CD14-positive monocyte (primary cell): ENCODE measurements at regions of chr19 and their contacts with region 1.

Region 1: DNA sequence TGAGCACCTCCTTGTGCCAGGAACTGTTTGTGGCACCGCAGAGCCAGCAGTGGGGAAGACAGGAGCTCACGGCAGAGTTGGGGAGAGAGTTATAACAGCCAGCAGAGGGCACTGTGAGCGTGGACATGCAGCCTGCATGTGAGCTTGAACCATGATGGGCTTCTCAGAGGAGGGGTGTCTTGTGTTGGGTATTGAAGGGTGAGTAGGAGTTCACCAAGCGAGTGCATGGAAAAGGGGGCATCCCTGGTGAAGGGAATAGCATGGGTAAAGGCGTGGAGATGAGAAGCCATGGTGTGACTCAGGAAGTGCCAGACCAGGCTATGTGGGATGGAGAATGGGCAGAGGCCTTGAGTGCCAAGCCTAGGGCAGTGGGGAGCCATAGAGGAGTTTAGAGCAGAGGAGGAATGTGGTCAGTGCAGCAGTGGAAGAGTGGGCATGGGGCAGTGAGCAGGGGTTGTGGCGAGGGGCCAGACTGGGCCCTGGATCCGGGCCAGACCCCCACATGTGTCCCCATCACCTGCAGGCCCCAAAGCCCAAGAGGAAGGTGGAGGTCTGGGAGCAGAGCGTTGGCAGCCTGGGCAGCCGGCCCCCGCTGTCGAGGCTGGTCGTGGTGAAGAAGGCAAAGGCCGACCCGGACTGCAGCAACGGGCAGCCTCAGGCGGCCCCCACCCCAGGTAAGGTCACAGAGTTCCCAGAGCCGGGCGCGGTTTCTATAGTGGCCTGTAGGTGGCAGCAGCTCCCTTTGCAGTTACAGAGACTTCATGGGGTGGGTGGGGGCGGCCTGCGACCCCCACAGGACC is 11.8 kb upstream of the SHD start:
- DNase-seq: peak; percentile 23 to 40 (median 36)
- H3K4me3 ChIP-seq: no peak overlapping the region
- H3K4me3 Mint-ChIP-seq: no peak overlapping the region
- H3K27ac ChIP-seq: no peak overlapping the region
- H3K27ac Mint-ChIP-seq: peak overlapping the region in 4 of 7 donors; percentile 50 to 60 (median 52)
- H3K4me1 ChIP-seq: peaks cover 9 to 10% of the 10 kb centered on the region in 2 donors
- H3K4me1 Mint-ChIP-seq: peaks cover 12% of the 10 kb centered on the region
- H3K27me3 ChIP-seq: no peaks in the 10 kb centered on the region
- H3K27me3 Mint-ChIP-seq: peaks cover 0 to 3% (median 2%) of the 10 kb centered on the region in 3 donors
- CTCF ChIP-seq: peak; percentile 89

Region 2: DNA sequence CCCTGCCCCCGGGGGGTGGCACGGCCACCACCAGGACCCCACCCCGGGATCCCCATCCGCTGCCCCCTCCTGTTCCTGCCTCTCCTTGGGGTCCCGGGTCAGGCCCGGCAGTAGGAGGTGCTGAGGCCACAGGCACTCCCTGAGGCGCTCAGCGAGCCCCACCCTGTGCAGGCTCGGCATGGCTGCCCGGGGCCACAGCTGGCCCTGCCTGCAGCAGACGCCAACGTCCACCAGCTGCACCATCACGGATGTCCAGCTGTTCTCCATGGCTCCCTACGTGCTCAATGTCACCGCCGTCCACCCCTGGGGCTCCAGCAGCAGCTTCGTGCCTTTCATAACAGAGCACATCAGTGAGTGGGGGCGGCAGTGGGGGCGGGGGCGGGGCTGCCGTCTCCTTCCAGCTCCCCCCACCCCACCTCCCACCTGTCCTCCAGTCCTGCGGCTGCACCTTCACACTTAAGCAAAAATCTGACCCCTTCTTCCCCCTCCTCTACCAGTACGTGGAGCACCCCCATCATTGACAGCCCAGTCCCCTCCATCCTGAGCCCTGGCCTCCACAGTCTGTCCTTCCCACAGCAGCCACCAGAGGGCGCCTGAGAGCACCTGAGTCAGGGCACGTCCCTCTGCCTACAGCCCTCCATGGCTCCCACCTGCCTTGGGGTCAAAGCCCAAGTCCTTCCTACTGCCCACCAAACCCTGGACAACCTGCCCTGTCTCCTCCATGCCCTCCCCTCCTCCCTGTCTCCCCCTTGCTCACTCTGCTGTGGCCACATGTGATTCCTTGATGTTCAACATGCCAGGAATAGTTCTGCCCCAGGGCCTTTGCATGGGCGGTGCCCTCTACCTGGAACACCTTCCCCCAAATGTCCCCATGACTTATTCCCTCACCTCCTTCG is 34.1 kb before region 1 on chr19:
- intact Hi-C with region 1: no loop called
- DNase-seq: peak; percentile 27 to 54 (median 39)
- H3K4me3 ChIP-seq: no peak overlapping the region
- H3K4me3 Mint-ChIP-seq: no peak overlapping the region
- H3K27ac ChIP-seq: no peak overlapping the region
- H3K27ac Mint-ChIP-seq: no peak overlapping the region
- H3K4me1 ChIP-seq: peaks cover 0 to 6% of the 10 kb centered on the region in 2 donors
- H3K4me1 Mint-ChIP-seq: peaks cover 7% of the 10 kb centered on the region
- H3K27me3 ChIP-seq: peaks cover 0 to 13% of the 10 kb centered on the region in 2 donors
- H3K27me3 Mint-ChIP-seq: peaks cover 10 to 13% (median 12%) of the 10 kb centered on the region in 3 donors
- CTCF ChIP-seq: peak; percentile 76

Region 3: GRCh38 chr19:4246767-4247593 is 20.3 kb before region 1 on chr19 and contains the start of gene YJU2:
- intact Hi-C with region 1: no loop called
- DNase-seq: peak; percentile 99 to 100 (median 100)
- H3K4me3 ChIP-seq: peak within 1 kb of the TSS; percentile 59 to 98 (median 84)
- H3K4me3 Mint-ChIP-seq: peak within 1 kb of the TSS; percentile 83 to 98
- H3K27ac ChIP-seq: peak within 1 kb of the TSS; percentile 90 to 100
- H3K27ac Mint-ChIP-seq: peak within 1 kb of the TSS; percentile 99 to 100 (median 100)
- H3K4me1 ChIP-seq: peaks cover 13 to 14% of the 10 kb centered on the region in 2 donors
- H3K4me1 Mint-ChIP-seq: peaks cover 12% of the 10 kb centered on the region
- H3K27me3 ChIP-seq: no peaks in the 10 kb centered on the region
- H3K27me3 Mint-ChIP-seq: peaks cover 0 to 3% (median 0%) of the 10 kb centered on the region in 3 donors
- CTCF ChIP-seq: peak; percentile 58
- polyA plus RNA-seq, gene YJU2: 8.6 to 19.3 (median 13.4) TPM

Region 4: DNA sequence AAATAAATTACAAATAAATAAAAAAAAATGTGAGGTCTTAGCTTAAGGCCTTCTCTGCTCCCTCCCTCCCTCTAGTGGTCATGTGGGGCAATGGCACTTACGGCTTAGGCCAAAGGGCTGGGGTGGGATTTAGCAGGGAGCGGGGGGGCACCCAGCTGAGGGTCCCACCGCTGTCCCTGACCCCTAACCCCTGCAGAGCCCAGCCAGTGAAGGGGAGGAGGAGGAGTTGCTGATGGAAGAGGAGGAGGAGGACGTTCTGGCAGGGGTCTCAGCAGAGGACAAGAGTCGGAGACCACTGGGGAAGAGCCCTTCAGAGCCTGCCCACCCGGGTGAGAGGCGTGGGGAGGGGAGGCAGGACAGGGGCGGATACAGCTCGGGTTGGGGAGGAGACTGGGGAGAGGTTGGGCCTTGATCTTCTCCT is 85.4 kb after region 1 on chr19:
- intact Hi-C with region 1: loop called (anchors 2 to 5 kb)
- DNase-seq: peak; percentile 33 to 58 (median 40)
- H3K4me3 ChIP-seq: no peak overlapping the region
- H3K4me3 Mint-ChIP-seq: no peak overlapping the region
- H3K27ac ChIP-seq: no peak overlapping the region
- H3K27ac Mint-ChIP-seq: no peak overlapping the region
- H3K4me1 ChIP-seq: no peaks in the 10 kb centered on the region
- H3K4me1 Mint-ChIP-seq: peaks cover 2% of the 10 kb centered on the region
- H3K27me3 ChIP-seq: no peaks in the 10 kb centered on the region
- H3K27me3 Mint-ChIP-seq: peaks cover 0 to 3% (median 0%) of the 10 kb centered on the region in 3 donors
- CTCF ChIP-seq: peak; percentile 95

Region 5: GRCh38 chr19:4524808-4525562 is 257.7 kb after region 1 on chr19:
- intact Hi-C with region 1: loop called in 1 of 2 experiments (anchors 10 kb)
- DNase-seq: peak; percentile 61 to 66 (median 62)
- H3K4me3 ChIP-seq: no peak overlapping the region
- H3K4me3 Mint-ChIP-seq: no peak overlapping the region
- H3K27ac ChIP-seq: no peak overlapping the region
- H3K27ac Mint-ChIP-seq: peak overlapping the region in 1 of 7 donors; percentile 6
- H3K4me1 ChIP-seq: peaks cover 0 to 4% of the 10 kb centered on the region in 2 donors
- H3K4me1 Mint-ChIP-seq: peaks cover 2% of the 10 kb centered on the region
- H3K27me3 ChIP-seq: no peaks in the 10 kb centered on the region
- H3K27me3 Mint-ChIP-seq: peaks cover 0 to 8% (median 4%) of the 10 kb centered on the region in 3 donors
- CTCF ChIP-seq: peak; percentile 83